Psoas muscle (tissue), 8 donors: ENCODE measurements at regions of chr6 and their contacts with region 1.

Region 1: GRCh38 chr6:44096612-44097011 is 30.6 kb downstream of the MRPL14 start:
- DNase-seq: peak; percentile 75 to 87
- ATAC-seq: peak; percentile 85 to 91 (median 86)
- H3K4me3 ChIP-seq: no peak overlapping the region
- H3K27ac ChIP-seq: peak overlapping the region; percentile 55
- H3K4me1 ChIP-seq: peaks cover 4% of the 10 kb centered on the region
- H3K27me3 ChIP-seq: no peaks in the 10 kb centered on the region
- CTCF ChIP-seq: peak; percentile 79

Region 2: GRCh38 chr6:43724914-43725642 is 371.5 kb before region 1 on chr6:
- intact Hi-C with region 1: no loop called
- DNase-seq: peak; percentile 82 to 90
- ATAC-seq: peak; percentile 46 to 77 (median 70)
- H3K4me3 ChIP-seq: no peak overlapping the region
- H3K27ac ChIP-seq: no peak overlapping the region
- H3K4me1 ChIP-seq: no peaks in the 10 kb centered on the region
- H3K27me3 ChIP-seq: no peaks in the 10 kb centered on the region
- CTCF ChIP-seq: no peak

Region 3: GRCh38 chr6:44133003-44133931 is 36.7 kb after region 1 on chr6:
- intact Hi-C with region 1: loop called in 1 of 2 experiments (anchors 5 kb)
- DNase-seq: peak; percentile 44 to 79
- ATAC-seq: peak; percentile 53 to 83 (median 61)
- H3K4me3 ChIP-seq: peak overlapping the region; percentile 34
- H3K27ac ChIP-seq: peak overlapping the region; percentile 46
- H3K4me1 ChIP-seq: peaks cover 22% of the 10 kb centered on the region
- H3K27me3 ChIP-seq: no peaks in the 10 kb centered on the region
- CTCF ChIP-seq: no peak

Region 4: DNA sequence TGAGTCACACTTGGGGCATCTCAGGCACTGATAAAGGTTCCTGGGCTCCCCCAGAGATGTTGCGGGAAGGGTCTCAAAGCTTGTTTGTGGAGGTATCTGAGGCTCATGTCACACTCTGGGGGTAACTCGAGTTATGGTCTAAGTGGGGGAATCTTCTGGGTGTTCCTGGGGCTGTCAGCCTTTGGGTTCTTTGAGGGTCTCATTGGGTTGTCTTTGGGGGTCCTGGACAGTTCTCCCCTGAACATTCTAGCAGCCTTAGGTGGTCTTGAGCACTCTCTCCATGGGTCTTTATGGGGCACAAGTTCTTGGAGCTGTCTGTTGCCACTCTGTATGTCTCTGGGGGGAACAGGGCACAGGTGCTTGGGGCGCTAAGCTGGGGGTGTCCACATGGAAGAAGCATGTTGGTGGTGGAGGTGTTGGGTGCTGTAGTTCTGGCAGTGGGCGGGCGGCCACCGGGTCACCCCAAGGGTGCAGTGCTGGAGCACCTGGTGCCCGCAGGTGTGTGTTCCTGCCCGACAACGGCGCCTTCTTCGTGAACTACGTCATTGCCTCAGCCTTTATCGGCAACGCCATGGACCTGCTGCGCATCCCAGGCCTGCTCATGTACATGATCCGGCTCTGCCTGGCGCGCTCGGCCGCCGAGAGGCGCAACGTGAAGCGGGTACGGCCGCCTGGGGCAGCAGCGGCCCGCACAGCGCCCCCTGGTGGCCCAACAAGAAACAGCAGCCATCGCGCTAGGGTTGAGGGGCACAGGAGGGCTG is 54.9 kb after region 1 on chr6:
- intact Hi-C with region 1: loop called (anchors 1 to 2 kb)
- DNase-seq: peak; percentile 82 to 87
- ATAC-seq: peak; percentile 80 to 89 (median 82)
- H3K4me3 ChIP-seq: no peak overlapping the region
- H3K27ac ChIP-seq: no peak overlapping the region
- H3K4me1 ChIP-seq: no peaks in the 10 kb centered on the region
- H3K27me3 ChIP-seq: no peaks in the 10 kb centered on the region
- CTCF ChIP-seq: peak; percentile 100

Region 5: DNA sequence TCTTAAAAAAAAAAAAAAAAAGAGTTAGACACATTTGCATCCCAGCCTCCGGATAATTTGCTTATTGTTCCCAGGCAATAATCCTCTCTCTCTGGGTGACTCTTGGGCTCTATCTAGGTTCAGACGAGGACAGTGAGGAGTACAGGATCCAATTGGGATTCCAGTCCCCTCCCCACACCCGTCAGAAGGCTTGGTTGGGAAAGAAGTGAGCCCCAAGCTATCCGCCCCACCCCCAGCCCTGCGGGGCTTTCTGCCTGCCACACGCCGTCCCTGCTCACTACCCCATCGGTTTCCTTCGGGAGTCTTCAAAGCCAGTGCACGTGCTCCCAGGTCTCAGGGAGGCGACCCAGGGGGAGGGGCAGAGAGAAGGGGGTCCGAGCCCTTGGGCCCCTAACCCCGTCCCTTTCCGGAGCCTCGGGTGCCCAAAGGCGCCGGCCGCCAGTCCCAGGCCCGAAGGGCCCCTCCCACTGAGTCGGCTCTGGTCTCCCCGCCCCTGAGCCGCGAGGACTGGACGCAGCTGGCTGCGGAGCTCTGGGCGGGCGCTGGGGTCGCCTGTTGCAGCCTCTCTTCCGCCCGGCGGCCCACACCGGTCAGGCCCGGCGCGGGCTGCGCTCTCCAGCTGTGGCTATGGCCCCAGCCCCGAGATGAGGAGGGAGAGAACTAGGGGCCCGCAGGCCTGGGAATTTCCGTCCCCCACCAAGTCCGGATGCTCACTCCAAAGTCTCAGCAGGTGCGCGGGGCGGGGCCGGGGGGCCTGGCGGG is 122.6 kb after region 1 on chr6:
- intact Hi-C with region 1: loop called in 1 of 2 experiments (anchors 5 kb)
- DNase-seq: peak; percentile 87 to 90
- ATAC-seq: peak; percentile 33 to 51 (median 42)
- H3K4me3 ChIP-seq: peak overlapping the region; percentile 61
- H3K27ac ChIP-seq: peak overlapping the region; percentile 87
- H3K4me1 ChIP-seq: peaks cover 45% of the 10 kb centered on the region
- H3K27me3 ChIP-seq: no peaks in the 10 kb centered on the region
- CTCF ChIP-seq: no peak

Region 6: DNA sequence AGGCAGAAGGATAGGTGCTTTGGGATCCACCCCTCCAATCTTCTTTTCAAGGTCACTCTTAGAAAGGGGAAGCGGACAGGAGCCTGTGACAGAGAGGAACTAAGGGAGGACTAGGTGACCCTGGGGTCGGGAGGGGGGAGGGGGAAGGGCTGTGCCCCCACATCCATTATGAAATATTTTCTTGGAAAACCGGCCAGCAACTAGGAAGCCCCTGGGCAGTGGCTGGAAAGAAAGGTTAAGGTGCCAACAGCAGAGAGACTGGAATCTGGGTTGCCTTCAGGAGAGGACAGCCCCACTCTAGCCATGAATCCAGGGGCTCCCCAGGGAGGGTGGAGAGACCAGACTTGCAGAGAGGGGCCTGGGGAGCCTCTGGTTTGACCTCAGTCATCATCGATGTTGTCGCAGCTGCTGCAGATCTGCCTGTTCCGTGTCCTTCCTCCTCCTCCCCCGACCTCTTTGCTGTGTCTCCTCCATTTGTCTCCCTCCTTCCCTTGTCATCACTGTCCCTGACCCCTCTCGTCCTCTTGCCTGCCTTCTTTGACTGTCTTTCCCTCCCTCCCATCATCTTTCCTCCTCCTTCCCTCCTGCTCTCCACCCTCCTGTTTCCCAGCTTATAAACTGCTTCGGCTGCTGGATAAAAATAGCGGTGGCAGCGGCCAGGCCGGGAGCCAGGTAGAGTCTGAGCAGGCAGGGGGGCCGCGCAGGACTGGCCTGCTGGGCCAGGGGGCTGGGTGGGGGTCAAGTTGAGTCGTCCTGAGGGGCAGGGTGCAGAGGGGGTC is 129.9 kb after region 1 on chr6:
- intact Hi-C with region 1: loop called in 1 of 2 experiments (anchors 5 kb)
- DNase-seq: peak in 1 of 2 donors; percentile 67
- ATAC-seq: peak in 3 of 4 donors; percentile 46 to 60 (median 50)
- H3K4me3 ChIP-seq: peak overlapping the region; percentile 71
- H3K27ac ChIP-seq: peak overlapping the region; percentile 87
- H3K4me1 ChIP-seq: peaks cover 67% of the 10 kb centered on the region
- H3K27me3 ChIP-seq: no peaks in the 10 kb centered on the region
- CTCF ChIP-seq: no peak

Region 7: GRCh38 chr6:44338228-44339122 is 241.9 kb after region 1 on chr6:
- intact Hi-C with region 1: loop called (anchors 10 kb)
- DNase-seq: peak; percentile 47 to 66
- ATAC-seq: peak; percentile 84 to 92 (median 87)
- H3K4me3 ChIP-seq: no peak overlapping the region
- H3K27ac ChIP-seq: no peak overlapping the region
- H3K4me1 ChIP-seq: no peaks in the 10 kb centered on the region
- H3K27me3 ChIP-seq: peaks cover 0 to 19% (median 3%) of the 10 kb centered on the region in 3 donors
- CTCF ChIP-seq: peak; percentile 67